GM12878 (cell line): ENCODE measurements at regions of chr6 and their contacts with region 1.

Region 1: DNA sequence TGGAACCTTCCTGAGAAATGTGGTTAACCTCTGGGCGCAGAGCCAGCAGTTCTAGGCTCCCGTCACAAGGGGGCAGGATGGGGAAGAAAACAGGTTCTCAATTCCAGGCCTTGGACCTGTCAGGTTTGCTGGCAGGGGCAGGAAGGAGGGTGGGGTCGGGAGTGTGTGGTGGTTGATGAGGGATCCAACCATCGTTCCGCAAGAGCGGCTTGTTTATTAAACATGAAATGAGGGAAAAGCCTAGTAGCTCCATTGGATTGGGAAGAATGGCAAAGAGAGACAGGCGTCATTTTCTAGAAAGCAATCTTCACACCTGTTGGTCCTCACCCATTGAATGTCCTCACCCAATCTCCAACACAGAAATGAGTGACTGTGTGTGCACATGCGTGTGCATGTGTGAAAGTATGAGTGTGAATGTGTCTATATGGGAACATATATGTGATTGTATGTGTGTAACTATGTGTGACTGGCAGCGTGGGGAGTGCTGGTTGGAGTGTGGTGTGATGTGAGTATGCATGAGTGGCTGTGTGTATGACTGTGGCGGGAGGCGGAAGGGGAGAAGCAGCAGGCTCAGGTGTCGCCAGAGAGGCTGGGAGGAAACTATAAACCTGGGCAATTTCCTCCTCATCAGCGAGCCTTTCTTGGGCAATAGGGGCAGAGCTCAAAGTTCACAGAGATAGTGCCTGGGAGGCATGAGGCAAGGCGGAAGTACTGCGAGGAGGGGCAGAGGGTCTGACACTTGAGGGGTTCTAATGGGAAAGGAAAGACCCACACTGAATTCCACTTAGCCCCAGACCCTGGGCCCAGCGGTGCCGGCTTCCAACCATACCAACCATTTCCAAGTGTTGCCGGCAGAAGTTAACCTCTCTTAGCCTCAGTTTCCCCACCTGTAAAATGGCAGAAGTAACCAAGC is 29.6 kb downstream of the SRSF3 start:
- DNase-seq: peak; percentile 68
- ATAC-seq: peak; percentile 84
- H3K4me3 ChIP-seq: no peak overlapping the region
- H3K27ac ChIP-seq: peak overlapping the region; percentile 63
- H3K4me1 ChIP-seq: peaks cover 35% of the 10 kb centered on the region
- H3K27me3 ChIP-seq: no peaks in the 10 kb centered on the region
- CTCF ChIP-seq: peak; percentile 89 to 95 (median 95)
- EP300 ChIP-seq: no peak
- POLR2A ChIP-seq: no peak
- RAD21 ChIP-seq: peak; percentile 98

Region 2: GRCh38 chr6:36650848-36651478 is 27.2 kb after region 1 on chr6:
- CTCF ChIA-PET with region 1: interaction called, 27 read pairs
- POLR2A ChIA-PET with region 1: interaction called, 20 read pairs
- RAD21 ChIA-PET with region 1: interaction called, 24 read pairs
- SMC1A ChIA-PET with region 1: interaction called, 18 read pairs
- in situ Hi-C with region 1: no loop called
- intact Hi-C with region 1: loop called (anchors 2 kb)
- DNase-seq: peak; percentile 69
- ATAC-seq: peak; percentile 95
- H3K4me3 ChIP-seq: no peak overlapping the region
- H3K27ac ChIP-seq: peak overlapping the region; percentile 52
- H3K4me1 ChIP-seq: peaks cover 42% of the 10 kb centered on the region
- H3K27me3 ChIP-seq: no peaks in the 10 kb centered on the region
- CTCF ChIP-seq: peak in 1 of 3 experiments; percentile 31; a peak in 1 of 6 replicates
- EP300 ChIP-seq: peak; percentile 59 to 90; a peak in 3 of 4 replicates
- POLR2A ChIP-seq: no peak
- RAD21 ChIP-seq: peak; percentile 34

Region 3: GRCh38 chr6:36701401-36701991 is 77.7 kb after region 1 on chr6:
- CTCF ChIA-PET with region 1: interaction called, 10 read pairs
- POLR2A ChIA-PET with region 1: no interaction called
- RAD21 ChIA-PET with region 1: interaction called, 3 read pairs
- SMC1A ChIA-PET with region 1: interaction called, 3 read pairs
- in situ Hi-C with region 1: no loop called
- intact Hi-C with region 1: no loop called
- DNase-seq: no peak
- ATAC-seq: peak; percentile 91
- H3K4me3 ChIP-seq: no peak overlapping the region
- H3K27ac ChIP-seq: no peak overlapping the region
- H3K4me1 ChIP-seq: no peaks in the 10 kb centered on the region
- H3K27me3 ChIP-seq: no peaks in the 10 kb centered on the region
- CTCF ChIP-seq: peak; percentile 41 to 52 (median 43); a peak in 5 of 6 replicates
- EP300 ChIP-seq: no peak
- POLR2A ChIP-seq: no peak
- RAD21 ChIP-seq: peak; percentile 58

Region 4: GRCh38 chr6:36752886-36753506 is 129.2 kb after region 1 on chr6:
- CTCF ChIA-PET with region 1: interaction called, 54 read pairs
- POLR2A ChIA-PET with region 1: interaction called, 5 read pairs
- RAD21 ChIA-PET with region 1: interaction called, 18 read pairs
- SMC1A ChIA-PET with region 1: interaction called, 31 read pairs
- in situ Hi-C with region 1: loop called (anchors 5 kb)
- intact Hi-C with region 1: no loop called
- DNase-seq: peak; percentile 82
- ATAC-seq: peak; percentile 67
- H3K4me3 ChIP-seq: 0 out of 2 replicates have a peak overlapping the region, but pooled peaks have one; percentile 7
- H3K27ac ChIP-seq: peak overlapping the region; percentile 80
- H3K4me1 ChIP-seq: peaks cover 56% of the 10 kb centered on the region
- H3K27me3 ChIP-seq: no peaks in the 10 kb centered on the region
- CTCF ChIP-seq: no peak
- EP300 ChIP-seq: peak; percentile 54 to 62; a peak in 3 of 4 replicates
- POLR2A ChIP-seq: no peak
- RAD21 ChIP-seq: no peak

Region 5: DNA sequence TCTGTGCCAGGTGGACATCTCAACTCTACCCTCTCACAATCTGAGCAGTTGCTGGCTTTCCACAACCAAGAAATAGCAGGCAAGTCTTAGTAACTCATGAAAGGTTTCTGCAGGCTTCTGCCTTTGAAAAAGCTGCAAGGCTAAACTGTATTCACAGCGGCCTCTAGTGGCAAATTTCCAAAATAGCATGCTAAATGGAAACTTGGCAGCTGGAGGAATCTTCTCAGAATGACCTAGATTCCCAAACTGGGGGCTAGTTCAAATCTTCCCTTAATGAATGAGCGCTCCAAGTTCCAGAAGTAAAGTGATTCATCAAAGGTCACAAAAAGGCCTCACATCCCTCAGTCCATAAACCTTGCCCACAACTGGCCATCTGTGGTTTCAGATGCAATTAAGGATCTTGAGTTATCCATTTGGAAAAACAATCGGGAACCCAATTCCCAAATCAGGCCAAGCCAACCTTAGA is 227.4 kb after region 1 on chr6:
- CTCF ChIA-PET with region 1: interaction called, 3 read pairs
- POLR2A ChIA-PET with region 1: no interaction called
- RAD21 ChIA-PET with region 1: no interaction called
- SMC1A ChIA-PET with region 1: no interaction called
- in situ Hi-C with region 1: no loop called
- intact Hi-C with region 1: loop called (anchors 10 kb)
- DNase-seq: no peak
- ATAC-seq: peak; percentile 46; the same call in 2 of the 3 replicates
- H3K4me3 ChIP-seq: no peak overlapping the region
- H3K27ac ChIP-seq: no peak overlapping the region
- H3K4me1 ChIP-seq: no peaks in the 10 kb centered on the region
- H3K27me3 ChIP-seq: no peaks in the 10 kb centered on the region
- CTCF ChIP-seq: peak; percentile 71 to 79 (median 77)
- EP300 ChIP-seq: no peak
- POLR2A ChIP-seq: no peak
- RAD21 ChIP-seq: peak; percentile 70

Region 6: DNA sequence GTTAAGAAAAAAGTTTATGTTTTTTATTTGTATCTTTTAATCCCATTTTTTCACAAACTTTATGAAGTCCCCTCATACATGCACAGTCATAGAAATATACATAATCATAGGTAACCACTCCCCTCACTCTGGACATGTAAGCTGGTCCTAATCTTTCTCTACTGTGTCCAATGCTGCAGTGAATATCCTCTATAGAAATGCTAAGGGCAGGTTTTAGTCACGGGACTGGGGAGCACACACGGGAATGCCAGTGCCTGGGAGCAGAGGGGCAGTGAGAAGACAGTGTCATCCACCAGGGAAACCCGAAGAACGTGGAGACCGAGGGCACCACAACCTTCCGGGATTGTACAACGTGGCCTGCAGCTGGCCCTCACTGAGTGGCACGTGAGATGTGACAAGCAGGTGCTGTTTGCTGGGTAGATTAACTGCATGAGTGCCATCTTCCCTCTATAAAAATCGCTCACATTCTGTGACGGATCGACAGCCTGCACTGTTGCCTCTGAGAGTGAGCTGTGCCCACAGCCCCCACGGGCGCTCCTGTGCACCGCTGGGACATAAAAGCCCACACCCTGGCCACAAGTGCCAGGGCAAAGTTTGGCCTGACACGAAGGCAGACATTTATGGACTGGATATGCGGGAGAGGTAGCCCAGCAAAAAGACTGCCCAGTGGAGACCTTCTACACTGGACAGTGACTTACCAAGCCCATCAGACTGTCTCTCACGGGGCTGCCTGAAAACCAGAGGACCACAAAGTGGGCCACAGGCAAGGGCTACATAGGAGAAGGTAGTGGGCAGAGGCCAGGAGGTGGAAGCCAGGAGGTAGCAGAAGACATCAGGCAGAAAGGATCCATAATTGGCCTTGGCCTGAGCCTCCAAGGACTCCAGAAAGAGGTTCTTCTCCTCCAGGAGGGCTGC is 444.8 kb after region 1 on chr6:
- CTCF ChIA-PET with region 1: no interaction called
- POLR2A ChIA-PET with region 1: no interaction called
- RAD21 ChIA-PET with region 1: no interaction called
- SMC1A ChIA-PET with region 1: no interaction called
- in situ Hi-C with region 1: no loop called
- intact Hi-C with region 1: no loop called
- DNase-seq: no peak
- ATAC-seq: no peak
- H3K4me3 ChIP-seq: no peak overlapping the region
- H3K27ac ChIP-seq: no peak overlapping the region
- H3K4me1 ChIP-seq: peaks cover 9% of the 10 kb centered on the region
- H3K27me3 ChIP-seq: no peaks in the 10 kb centered on the region
- CTCF ChIP-seq: no peak
- EP300 ChIP-seq: no peak
- POLR2A ChIP-seq: no peak
- RAD21 ChIP-seq: no peak